Heart left ventricle (tissue), 16 donors: ENCODE measurements at regions of chr18 and their contacts with region 1.

Region 1: GRCh38 chr18:79528846-79529245 is 133.1 kb downstream of the NFATC1 start:
- DNase-seq: peak; percentile 53 to 70 (median 67)
- ATAC-seq: peak; percentile 18 to 60 (median 42)
- H3K4me3 ChIP-seq: no peak overlapping the region
- H3K27ac ChIP-seq: no peak overlapping the region
- H3K4me1 ChIP-seq: peaks cover 0 to 21% (median 12%) of the 10 kb centered on the region in 12 donors
- H3K27me3 ChIP-seq: peaks cover 0 to 7% (median 0%) of the 10 kb centered on the region in 9 donors
- CTCF ChIP-seq: peak; percentile 83 to 95 (median 91)
- POLR2A ChIP-seq: no peak

Region 2: GRCh38 chr18:79092874-79093273 is 436.0 kb before region 1 on chr18:
- intact Hi-C with region 1: no loop called
- DNase-seq: no peak
- ATAC-seq: no peak
- H3K4me3 ChIP-seq: no peak overlapping the region
- H3K27ac ChIP-seq: no peak overlapping the region
- H3K4me1 ChIP-seq: peaks cover 0 to 14% (median 0%) of the 10 kb centered on the region in 12 donors
- H3K27me3 ChIP-seq: no peaks in the 10 kb centered on the region
- CTCF ChIP-seq: no peak
- POLR2A ChIP-seq: no peak

Region 3: DNA sequence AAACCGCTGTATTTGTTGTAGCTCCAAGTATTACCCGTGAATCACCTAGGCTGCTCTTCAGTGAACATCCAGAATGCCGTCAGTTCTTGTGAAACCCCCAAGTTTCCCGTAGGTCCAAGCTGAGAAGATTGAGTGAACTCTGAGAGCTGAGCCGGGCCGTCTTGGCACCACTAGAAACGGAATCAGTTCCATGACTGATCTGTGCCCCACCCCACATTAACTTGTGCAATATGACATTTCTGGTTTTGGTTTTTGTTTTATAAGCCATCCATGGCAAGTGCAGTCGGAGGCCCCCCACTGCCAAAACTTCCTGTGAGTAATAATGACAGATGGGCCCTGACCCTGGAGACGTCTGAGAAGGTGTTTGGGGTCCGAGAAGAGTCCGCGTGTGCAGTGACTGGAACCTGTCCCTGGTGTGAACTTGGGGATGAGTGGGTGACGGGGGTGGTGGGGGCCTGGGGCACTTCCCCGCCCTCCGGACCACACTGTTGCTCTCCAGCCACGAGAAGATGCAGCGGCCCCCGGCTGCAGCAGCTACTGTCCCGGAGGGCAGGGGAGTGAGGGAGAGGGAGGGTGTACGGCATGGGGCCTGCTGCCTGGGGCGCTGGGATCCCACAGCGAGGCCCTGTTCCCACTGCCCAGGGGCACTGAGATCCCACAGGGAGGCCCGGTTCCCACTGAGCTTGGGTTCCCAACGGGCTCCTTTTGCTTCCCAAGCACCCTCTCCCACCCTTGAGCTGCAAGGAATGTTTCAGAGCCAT is 106.6 kb before region 1 on chr18:
- intact Hi-C with region 1: no loop called
- DNase-seq: peak in 1 of 5 donors; percentile 39
- ATAC-seq: no peak
- H3K4me3 ChIP-seq: no peak overlapping the region
- H3K27ac ChIP-seq: no peak overlapping the region
- H3K4me1 ChIP-seq: peaks cover 0 to 23% (median 7%) of the 10 kb centered on the region in 12 donors
- H3K27me3 ChIP-seq: no peaks in the 10 kb centered on the region
- CTCF ChIP-seq: no peak
- POLR2A ChIP-seq: no peak

Region 4: GRCh38 chr18:79644006-79644665 is 115.3 kb after region 1 on chr18:
- intact Hi-C with region 1: loop called (anchors 2 to 5 kb)
- DNase-seq: peak; percentile 55 to 84 (median 61)
- ATAC-seq: peak; percentile 79 to 88 (median 80)
- H3K4me3 ChIP-seq: peak overlapping the region in 2 of 12 donors; percentile 4 to 9
- H3K27ac ChIP-seq: no peak overlapping the region
- H3K4me1 ChIP-seq: peaks cover 0 to 16% (median 3%) of the 10 kb centered on the region in 12 donors
- H3K27me3 ChIP-seq: peaks cover 0 to 25% (median 0%) of the 10 kb centered on the region in 9 donors
- CTCF ChIP-seq: peak in 11 of 12 donors; percentile 94 to 100 (median 97)
- POLR2A ChIP-seq: no peak